CD8-positive, alpha-beta T cell (primary cell): ENCODE measurements at regions of chr22 and their contacts with region 1.

Region 1: DNA sequence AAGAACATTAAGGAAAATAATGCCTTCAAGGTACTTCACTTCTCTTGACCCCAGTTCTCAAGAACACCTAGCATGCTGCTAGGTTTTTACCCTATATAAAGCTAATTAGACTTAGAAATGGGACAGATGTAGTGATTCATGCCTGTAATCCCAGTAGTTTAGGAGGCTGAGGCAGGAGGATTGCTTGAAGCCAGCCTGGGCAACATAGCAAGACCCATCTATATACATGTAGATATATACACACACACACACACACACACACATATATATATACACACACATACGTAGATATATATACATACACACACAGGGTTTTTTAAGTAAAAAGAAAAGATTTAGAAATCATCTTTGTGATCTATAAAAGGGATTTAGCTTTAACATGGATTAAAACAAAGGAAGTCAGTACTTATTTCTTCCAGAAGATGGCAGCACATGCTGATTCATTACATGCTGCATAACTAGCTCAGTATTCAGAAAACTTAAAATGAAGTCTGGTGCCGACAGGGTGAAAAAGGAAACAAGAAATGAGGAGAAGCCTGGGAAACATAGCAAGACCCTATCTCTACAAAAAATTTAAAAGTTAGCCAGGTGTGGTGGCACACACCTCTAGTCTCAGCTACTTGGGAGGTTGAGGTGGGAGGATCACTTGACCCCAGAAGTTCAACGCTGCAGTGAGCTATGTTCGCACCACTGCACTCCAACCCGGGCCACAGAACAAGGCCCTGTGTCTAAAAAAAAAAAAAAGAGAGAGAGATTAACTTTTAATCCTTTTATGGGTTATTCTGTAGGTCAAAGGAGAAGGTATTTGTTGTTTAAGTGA is 28.5 kb upstream of the RBX1 start:
- DNase-seq: peak in 4 of 9 experiments; percentile 1 to 82 (median 50)
- ATAC-seq: peak; percentile 98
- H3K4me3 ChIP-seq: no peak overlapping the region
- H3K4me3 Mint-ChIP-seq: peak overlapping the region; percentile 40
- H3K27ac ChIP-seq: no peak overlapping the region
- H3K27ac Mint-ChIP-seq: peak overlapping the region; percentile 33
- H3K4me1 ChIP-seq: peaks cover 5% of the 10 kb centered on the region
- H3K4me1 Mint-ChIP-seq: peaks cover 3% of the 10 kb centered on the region
- H3K27me3 ChIP-seq: no peaks in the 10 kb centered on the region
- H3K27me3 Mint-ChIP-seq: no peaks in the 10 kb centered on the region
- CTCF ChIP-seq: peak; percentile 80

Region 2: GRCh38 chr22:40363059-40363458 is 559.6 kb before region 1 on chr22:
- CTCF ChIA-PET with region 1: no interaction called
- POLR2A ChIA-PET with region 1: no interaction called
- intact Hi-C with region 1: no loop called
- DNase-seq: no peak
- ATAC-seq: no peak
- H3K4me3 ChIP-seq: no peak overlapping the region
- H3K4me3 Mint-ChIP-seq: no peak overlapping the region
- H3K27ac ChIP-seq: no peak overlapping the region
- H3K27ac Mint-ChIP-seq: no peak overlapping the region
- H3K4me1 ChIP-seq: no peaks in the 10 kb centered on the region
- H3K4me1 Mint-ChIP-seq: no peaks in the 10 kb centered on the region
- H3K27me3 ChIP-seq: no peaks in the 10 kb centered on the region
- H3K27me3 Mint-ChIP-seq: no peaks in the 10 kb centered on the region
- CTCF ChIP-seq: no peak

Region 3: DNA sequence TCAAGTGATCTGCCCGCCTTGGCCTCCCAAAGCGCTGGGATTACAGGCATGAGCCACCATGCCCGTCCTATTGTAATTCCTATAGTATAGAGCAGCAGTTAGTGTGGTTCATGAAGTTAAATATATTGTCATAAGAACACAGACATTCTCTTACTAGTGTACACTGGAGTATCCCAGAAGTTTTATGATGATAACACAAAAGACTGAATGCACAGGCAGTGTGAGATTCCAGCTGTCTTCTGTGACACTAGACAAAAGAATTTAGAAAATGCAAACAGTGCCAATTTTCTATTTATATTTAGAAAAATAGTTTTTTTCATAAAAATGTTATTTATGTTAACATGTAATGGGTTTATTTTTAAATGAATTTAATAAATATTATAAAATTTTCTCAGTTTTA is 10.9 kb before region 1 on chr22:
- CTCF ChIA-PET with region 1: interaction called, 14 read pairs
- POLR2A ChIA-PET with region 1: interaction called, 7 read pairs
- intact Hi-C with region 1: no loop called
- DNase-seq: no peak
- ATAC-seq: no peak
- H3K4me3 ChIP-seq: no peak overlapping the region
- H3K4me3 Mint-ChIP-seq: no peak overlapping the region
- H3K27ac ChIP-seq: no peak overlapping the region
- H3K27ac Mint-ChIP-seq: no peak overlapping the region
- H3K4me1 ChIP-seq: no peaks in the 10 kb centered on the region
- H3K4me1 Mint-ChIP-seq: no peaks in the 10 kb centered on the region
- H3K27me3 ChIP-seq: no peaks in the 10 kb centered on the region
- H3K27me3 Mint-ChIP-seq: no peaks in the 10 kb centered on the region
- CTCF ChIP-seq: no peak

Region 4: GRCh38 chr22:40960145-40960544 is 37.5 kb after region 1 on chr22:
- CTCF ChIA-PET with region 1: no interaction called
- POLR2A ChIA-PET with region 1: no interaction called
- intact Hi-C with region 1: no loop called
- DNase-seq: no peak
- ATAC-seq: no peak
- H3K4me3 ChIP-seq: no peak overlapping the region
- H3K4me3 Mint-ChIP-seq: no peak overlapping the region
- H3K27ac ChIP-seq: no peak overlapping the region
- H3K27ac Mint-ChIP-seq: peak overlapping the region; percentile 79
- H3K4me1 ChIP-seq: no peaks in the 10 kb centered on the region
- H3K4me1 Mint-ChIP-seq: peaks cover 20% of the 10 kb centered on the region
- H3K27me3 ChIP-seq: no peaks in the 10 kb centered on the region
- H3K27me3 Mint-ChIP-seq: no peaks in the 10 kb centered on the region
- CTCF ChIP-seq: no peak

Region 5: GRCh38 chr22:41127451-41127850 is 204.8 kb after region 1 on chr22:
- CTCF ChIA-PET with region 1: interaction called, 3 read pairs
- POLR2A ChIA-PET with region 1: no interaction called
- intact Hi-C with region 1: loop called in 1 of 2 experiments (anchors 10 kb)
- DNase-seq: no peak
- ATAC-seq: no peak
- H3K4me3 ChIP-seq: no peak overlapping the region
- H3K4me3 Mint-ChIP-seq: no peak overlapping the region
- H3K27ac ChIP-seq: no peak overlapping the region
- H3K27ac Mint-ChIP-seq: no peak overlapping the region
- H3K4me1 ChIP-seq: no peaks in the 10 kb centered on the region
- H3K4me1 Mint-ChIP-seq: peaks cover 13% of the 10 kb centered on the region
- H3K27me3 ChIP-seq: no peaks in the 10 kb centered on the region
- H3K27me3 Mint-ChIP-seq: no peaks in the 10 kb centered on the region
- CTCF ChIP-seq: no peak

Region 6: DNA sequence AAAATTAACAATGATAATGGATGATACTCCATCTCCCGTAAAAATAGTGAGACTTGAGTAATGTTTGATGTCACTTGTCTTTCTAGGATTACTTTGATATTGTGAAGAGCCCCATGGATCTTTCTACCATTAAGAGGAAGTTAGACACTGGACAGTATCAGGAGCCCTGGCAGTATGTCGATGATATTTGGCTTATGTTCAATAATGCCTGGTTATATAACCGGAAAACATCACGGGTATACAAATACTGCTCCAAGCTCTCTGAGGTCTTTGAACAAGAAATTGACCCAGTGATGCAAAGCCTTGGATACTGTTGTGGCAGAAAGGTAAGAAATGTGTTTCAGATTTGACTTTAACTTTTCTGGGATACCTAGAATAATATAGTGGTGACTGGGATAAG is 234.4 kb after region 1 on chr22:
- CTCF ChIA-PET with region 1: interaction called, 15 read pairs
- POLR2A ChIA-PET with region 1: no interaction called
- intact Hi-C with region 1: loop called in 1 of 2 experiments (anchors 10 kb)
- DNase-seq: no peak
- ATAC-seq: no peak
- H3K4me3 ChIP-seq: no peak overlapping the region
- H3K4me3 Mint-ChIP-seq: no peak overlapping the region
- H3K27ac ChIP-seq: no peak overlapping the region
- H3K27ac Mint-ChIP-seq: no peak overlapping the region
- H3K4me1 ChIP-seq: no peaks in the 10 kb centered on the region
- H3K4me1 Mint-ChIP-seq: no peaks in the 10 kb centered on the region
- H3K27me3 ChIP-seq: no peaks in the 10 kb centered on the region
- H3K27me3 Mint-ChIP-seq: no peaks in the 10 kb centered on the region
- CTCF ChIP-seq: no peak

Region 7: GRCh38 chr22:41237707-41238569 is 315.2 kb after region 1 on chr22:
- CTCF ChIA-PET with region 1: interaction called, 80 read pairs
- POLR2A ChIA-PET with region 1: interaction called, 25 read pairs
- intact Hi-C with region 1: loop called in 1 of 2 experiments (anchors 1 kb)
- DNase-seq: peak; percentile 67 to 91 (median 83)
- ATAC-seq: peak; percentile 92
- H3K4me3 ChIP-seq: peak overlapping the region; percentile 39 to 65
- H3K4me3 Mint-ChIP-seq: peak overlapping the region; percentile 76
- H3K27ac ChIP-seq: no peak overlapping the region
- H3K27ac Mint-ChIP-seq: no peak overlapping the region
- H3K4me1 ChIP-seq: peaks cover 7% of the 10 kb centered on the region
- H3K4me1 Mint-ChIP-seq: peaks cover 11% of the 10 kb centered on the region
- H3K27me3 ChIP-seq: no peaks in the 10 kb centered on the region
- H3K27me3 Mint-ChIP-seq: no peaks in the 10 kb centered on the region
- CTCF ChIP-seq: peak; percentile 67